ENCODE measurements at regions of chr18 and their contacts with region 1.

Region 1: DNA sequence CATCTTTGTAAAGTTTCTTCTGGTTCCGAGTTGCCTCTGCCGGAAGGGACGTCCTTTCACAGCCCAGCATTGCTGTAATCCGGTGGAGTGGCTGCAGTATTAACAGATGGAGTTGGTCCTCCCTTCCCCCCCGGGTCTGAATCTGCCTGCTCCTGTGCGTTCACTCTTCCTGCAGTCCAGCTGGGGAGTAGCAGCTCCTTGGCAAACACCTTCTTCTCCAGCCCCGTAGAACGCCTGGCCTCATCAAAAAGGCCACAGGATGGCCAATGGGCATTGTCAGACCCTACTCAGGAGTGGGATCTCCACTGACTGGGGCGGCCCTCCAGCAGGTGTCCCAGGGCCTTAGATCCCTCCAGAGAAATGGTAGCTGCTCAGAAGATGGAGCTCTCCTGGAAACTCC is 234.0 kb downstream of the FAM210A start:
- DNase-seq: peak in 1 of 2 donors; percentile 58
- H3K4me3 ChIP-seq: no peak overlapping the region
- H3K27ac ChIP-seq: no peak overlapping the region
- H3K4me1 ChIP-seq: peaks cover 0 to 12% of the 10 kb centered on the region in 2 donors
- H3K27me3 ChIP-seq: no peaks in the 10 kb centered on the region
- CTCF ChIP-seq: no peak

Region 2: GRCh38 chr18:13463526-13464210 is 28.6 kb before region 1 on chr18:
- intact Hi-C with region 1: loop called (anchors 2 kb)
- DNase-seq: no peak
- H3K4me3 ChIP-seq: no peak overlapping the region
- H3K27ac ChIP-seq: peak overlapping the region in 1 of 2 donors; percentile 15
- H3K4me1 ChIP-seq: peaks cover 3 to 11% of the 10 kb centered on the region in 2 donors
- H3K27me3 ChIP-seq: no peaks in the 10 kb centered on the region
- CTCF ChIP-seq: no peak